WTC11 (cell line): ENCODE measurements at regions of chr13 and their contacts with region 1.

Region 1: GRCh38 chr13:42969558-42970172 is 22.4 kb downstream of the EPSTI1 start:
- DNase-seq: peak; percentile 90
- ATAC-seq: peak; percentile 71
- H3K4me3 Mint-ChIP-seq: no peak overlapping the region
- H3K27ac Mint-ChIP-seq: peak overlapping the region; percentile 84; the same call in 1 of the 2 replicates
- H3K4me1 Mint-ChIP-seq: peaks cover 47% of the 10 kb centered on the region
- H3K27me3 Mint-ChIP-seq: no peaks in the 10 kb centered on the region
- CTCF ChIP-seq: peak; percentile 89

Region 2: DNA sequence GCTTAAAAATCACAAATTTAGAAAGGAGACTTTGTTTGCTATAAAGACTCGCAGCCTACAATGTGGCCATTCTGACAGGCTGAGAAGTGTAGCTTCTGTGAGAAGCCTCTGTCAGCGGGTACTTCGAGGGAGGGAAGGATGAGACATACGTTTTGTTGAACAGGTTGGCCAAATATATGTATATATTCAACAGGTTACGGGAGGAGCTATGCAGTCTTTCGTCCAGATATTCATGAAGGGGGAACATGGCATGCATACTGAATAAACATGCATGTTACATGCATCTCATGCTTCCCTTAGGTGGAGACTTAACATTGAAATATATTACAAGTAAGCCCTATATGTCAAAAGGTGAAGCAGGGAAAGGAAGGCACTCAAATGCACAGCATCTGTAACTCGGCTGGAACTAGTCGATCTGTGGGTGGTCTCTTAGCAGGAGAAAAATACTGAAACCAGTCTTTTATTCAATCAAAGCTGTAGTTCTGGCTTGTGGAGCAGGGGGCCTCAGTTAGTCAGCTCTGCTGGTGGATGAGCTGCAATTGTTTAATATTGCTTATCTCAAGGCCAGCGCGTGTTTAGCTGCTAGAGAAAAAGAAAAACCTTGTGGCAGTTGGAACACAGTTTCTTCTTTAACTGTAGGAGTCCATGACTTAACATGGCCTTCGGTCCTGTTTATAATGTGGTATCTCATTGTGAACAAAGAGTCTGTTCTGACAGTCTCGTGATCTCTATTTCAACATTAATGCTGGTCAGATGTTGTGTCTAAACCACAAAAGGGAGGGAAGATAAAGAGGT is 94.0 kb before region 1 on chr13:
- CTCF ChIA-PET with region 1: interaction called, 11 read pairs
- POLR2A ChIA-PET with region 1: no interaction called
- DNase-seq: peak; percentile 58
- ATAC-seq: peak; percentile 83
- H3K4me3 Mint-ChIP-seq: peak overlapping the region; percentile 61
- H3K27ac Mint-ChIP-seq: peak overlapping the region; percentile 98
- H3K4me1 Mint-ChIP-seq: peaks cover 63% of the 10 kb centered on the region
- H3K27me3 Mint-ChIP-seq: peaks cover 18% of the 10 kb centered on the region
- CTCF ChIP-seq: no peak

Region 3: GRCh38 chr13:43023289-43023951 is 53.8 kb after region 1 on chr13 and contains the start of gene DNAJC15:
- CTCF ChIA-PET with region 1: interaction called, 12 read pairs
- POLR2A ChIA-PET with region 1: no interaction called
- DNase-seq: peak; percentile 81
- ATAC-seq: peak; percentile 87
- H3K4me3 Mint-ChIP-seq: peak within 1 kb of the TSS; percentile 92
- H3K27ac Mint-ChIP-seq: peak within 1 kb of the TSS; percentile 88
- H3K4me1 Mint-ChIP-seq: peaks cover 10% of the 10 kb centered on the region
- H3K27me3 Mint-ChIP-seq: peaks cover 4% of the 10 kb centered on the region
- CTCF ChIP-seq: no peak
- total RNA-seq, gene DNAJC15: 12.2 to 15.6 TPM (median 13.5 TPM) in 3 replicates

Region 4: GRCh38 chr13:43132257-43132656 is 162.6 kb after region 1 on chr13:
- CTCF ChIA-PET with region 1: interaction called, 14 read pairs
- POLR2A ChIA-PET with region 1: no interaction called
- DNase-seq: peak; percentile 41
- ATAC-seq: peak; percentile 92
- H3K4me3 Mint-ChIP-seq: no peak overlapping the region
- H3K27ac Mint-ChIP-seq: no peak overlapping the region
- H3K4me1 Mint-ChIP-seq: peaks cover 60% of the 10 kb centered on the region
- H3K27me3 Mint-ChIP-seq: no peaks in the 10 kb centered on the region
- CTCF ChIP-seq: no peak